CD8-positive, alpha-beta T cell (primary cell): ENCODE measurements at regions of chr1 and their contacts with region 1.

Region 1: DNA sequence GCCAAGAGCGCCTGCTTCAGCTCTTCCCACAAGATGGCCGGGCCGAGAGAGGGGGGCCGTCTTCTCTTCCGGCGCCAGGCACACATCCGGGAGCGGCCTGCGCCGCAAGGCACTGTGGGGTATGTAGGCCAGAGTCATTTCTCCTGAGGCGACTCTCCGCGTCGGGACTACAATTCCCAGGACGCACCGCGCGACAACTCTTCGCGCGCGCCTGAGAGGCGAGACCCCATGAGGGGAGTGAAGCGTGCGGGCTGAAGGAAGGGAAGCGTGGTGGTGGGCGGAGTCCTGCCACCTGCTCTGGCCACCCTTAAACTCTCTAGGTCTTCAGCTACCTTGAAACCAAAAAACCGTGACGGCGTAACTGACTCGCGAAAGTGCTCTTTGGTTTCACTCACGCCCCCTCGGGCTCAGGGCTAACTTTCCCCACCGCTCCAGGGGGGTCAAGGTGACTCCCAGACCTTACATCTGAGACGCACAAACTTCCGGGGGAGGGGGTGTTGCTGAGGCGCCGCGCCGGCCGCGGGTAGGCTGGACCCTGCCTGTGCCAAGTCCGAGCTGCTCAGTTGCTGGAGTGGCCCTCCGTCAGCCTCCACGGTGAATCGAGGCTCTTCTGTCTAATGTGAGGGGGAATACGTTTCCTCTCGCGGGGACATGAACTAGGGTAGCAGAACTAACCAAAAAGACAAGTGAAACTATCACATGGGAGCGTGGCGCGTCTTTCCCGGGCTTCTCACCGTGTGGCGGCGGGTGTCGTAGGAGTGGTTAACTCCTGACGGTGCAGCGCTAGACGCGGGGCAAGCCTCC is at the start of gene SERBP1:
- DNase-seq: peak; percentile 89 to 99 (median 95)
- ATAC-seq: peak; percentile 84
- H3K4me3 ChIP-seq: peak within 1 kb of the TSS; percentile 86 to 94
- H3K4me3 Mint-ChIP-seq: peak within 1 kb of the TSS; percentile 92
- H3K27ac ChIP-seq: peak within 1 kb of the TSS; percentile 86 to 98
- H3K27ac Mint-ChIP-seq: peak within 1 kb of the TSS; percentile 95
- H3K4me1 ChIP-seq: peaks cover 31% of the 10 kb centered on the region
- H3K4me1 Mint-ChIP-seq: peaks cover 54% of the 10 kb centered on the region
- H3K27me3 ChIP-seq: no peaks in the 10 kb centered on the region
- H3K27me3 Mint-ChIP-seq: no peaks in the 10 kb centered on the region
- CTCF ChIP-seq: no peak
- total RNA-seq, gene SERBP1: 136 to 143 TPM

Region 2: GRCh38 chr1:66929999-66930822 is 500.3 kb before region 1 on chr1:
- CTCF ChIA-PET with region 1: no interaction called
- POLR2A ChIA-PET with region 1: no interaction called
- intact Hi-C with region 1: loop called (anchors 1 to 2 kb)
- DNase-seq: peak; percentile 88 to 97 (median 95)
- ATAC-seq: peak; percentile 70
- H3K4me3 ChIP-seq: peak overlapping the region; percentile 86 to 90
- H3K4me3 Mint-ChIP-seq: peak overlapping the region; percentile 86
- H3K27ac ChIP-seq: peak overlapping the region; percentile 87 to 90
- H3K27ac Mint-ChIP-seq: peak overlapping the region; percentile 94
- H3K4me1 ChIP-seq: peaks cover 40% of the 10 kb centered on the region
- H3K4me1 Mint-ChIP-seq: peaks cover 61% of the 10 kb centered on the region
- H3K27me3 ChIP-seq: no peaks in the 10 kb centered on the region
- H3K27me3 Mint-ChIP-seq: no peaks in the 10 kb centered on the region
- CTCF ChIP-seq: peak; percentile 17

Region 3: GRCh38 chr1:67174716-67175284 is 255.8 kb before region 1 on chr1:
- CTCF ChIA-PET with region 1: no interaction called
- POLR2A ChIA-PET with region 1: interaction called, 6 read pairs
- intact Hi-C with region 1: loop called in 1 of 2 experiments (anchors 5 kb)
- DNase-seq: no peak
- ATAC-seq: no peak
- H3K4me3 ChIP-seq: no peak overlapping the region
- H3K4me3 Mint-ChIP-seq: no peak overlapping the region
- H3K27ac ChIP-seq: no peak overlapping the region
- H3K27ac Mint-ChIP-seq: no peak overlapping the region
- H3K4me1 ChIP-seq: peaks cover 35% of the 10 kb centered on the region
- H3K4me1 Mint-ChIP-seq: peaks cover 42% of the 10 kb centered on the region
- H3K27me3 ChIP-seq: no peaks in the 10 kb centered on the region
- H3K27me3 Mint-ChIP-seq: no peaks in the 10 kb centered on the region
- CTCF ChIP-seq: no peak

Region 4: DNA sequence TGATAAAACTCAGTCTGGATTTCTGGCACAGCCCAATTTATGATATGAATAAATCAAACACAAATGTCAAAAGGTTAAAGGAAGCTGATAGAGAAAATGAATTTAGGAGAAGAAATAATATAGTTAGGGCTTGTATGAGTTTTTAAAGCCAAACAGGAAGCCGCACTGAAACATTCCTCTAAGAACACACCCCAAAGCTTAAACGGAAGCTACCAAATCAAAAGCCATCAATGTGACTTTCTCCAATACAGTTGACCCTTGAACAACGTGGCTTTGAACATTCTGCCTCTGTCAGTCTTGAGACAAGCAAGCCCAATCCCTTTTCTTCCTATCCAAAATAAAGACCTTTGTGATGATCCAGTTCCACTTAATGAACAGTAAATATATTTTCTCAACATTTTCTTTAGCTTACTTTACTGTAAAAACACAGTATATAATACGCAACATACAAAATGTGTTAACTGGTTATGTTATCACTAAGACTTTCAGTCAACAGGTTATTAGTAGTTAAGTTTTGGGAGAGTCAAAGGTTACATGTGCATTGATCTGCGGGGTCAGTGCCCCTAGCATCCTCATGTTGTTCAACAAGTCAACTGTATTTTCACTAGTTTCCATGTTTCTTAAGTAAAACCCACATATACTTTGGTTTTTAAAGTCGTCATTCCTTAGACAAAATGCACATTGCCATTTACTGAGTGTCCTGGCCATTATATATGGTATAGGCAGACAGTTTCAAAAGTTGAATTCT is 11.5 kb before region 1 on chr1:
- CTCF ChIA-PET with region 1: interaction called, 3 read pairs
- POLR2A ChIA-PET with region 1: interaction called, 16 read pairs
- intact Hi-C with region 1: no loop called
- DNase-seq: no peak
- ATAC-seq: no peak
- H3K4me3 ChIP-seq: no peak overlapping the region
- H3K4me3 Mint-ChIP-seq: no peak overlapping the region
- H3K27ac ChIP-seq: no peak overlapping the region
- H3K27ac Mint-ChIP-seq: peak overlapping the region; percentile 75
- H3K4me1 ChIP-seq: peaks cover 9% of the 10 kb centered on the region
- H3K4me1 Mint-ChIP-seq: peaks cover 62% of the 10 kb centered on the region
- H3K27me3 ChIP-seq: no peaks in the 10 kb centered on the region
- H3K27me3 Mint-ChIP-seq: no peaks in the 10 kb centered on the region
- CTCF ChIP-seq: no peak

Region 5: DNA sequence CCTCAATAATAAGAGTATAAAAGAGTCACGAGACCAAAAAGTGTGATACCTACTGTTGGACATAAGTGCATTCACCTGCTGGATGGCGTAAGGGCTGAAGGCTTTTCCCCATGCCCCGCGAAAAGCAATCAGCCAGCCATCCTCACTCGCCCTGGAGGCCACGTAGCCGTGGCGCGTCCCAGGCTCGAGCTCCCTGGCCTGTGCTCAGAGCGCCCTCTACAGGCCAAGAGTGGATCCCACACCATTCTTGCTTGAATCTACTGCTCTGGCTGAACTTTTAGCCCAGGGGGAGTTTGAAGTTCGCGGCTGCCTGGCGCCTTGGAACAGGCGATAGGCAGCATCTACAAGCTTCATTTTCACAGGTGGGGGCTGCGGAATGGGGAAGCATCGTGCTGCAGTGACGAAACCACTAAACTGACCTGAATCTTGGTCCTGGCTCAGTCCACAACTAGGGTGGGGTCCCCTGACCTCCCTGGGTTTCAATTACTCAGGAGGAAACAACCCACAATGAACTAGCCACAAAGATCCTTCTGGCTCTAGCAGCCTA is 69.9 kb after region 1 on chr1:
- CTCF ChIA-PET with region 1: no interaction called
- POLR2A ChIA-PET with region 1: no interaction called
- intact Hi-C with region 1: loop called in 1 of 2 experiments (anchors 5 kb)
- DNase-seq: peak; percentile 73 to 91 (median 81)
- ATAC-seq: peak; percentile 100
- H3K4me3 ChIP-seq: no peak overlapping the region
- H3K4me3 Mint-ChIP-seq: no peak overlapping the region
- H3K27ac ChIP-seq: no peak overlapping the region
- H3K27ac Mint-ChIP-seq: no peak overlapping the region
- H3K4me1 ChIP-seq: no peaks in the 10 kb centered on the region
- H3K4me1 Mint-ChIP-seq: peaks cover 4% of the 10 kb centered on the region
- H3K27me3 ChIP-seq: peaks cover 0 to 7% of the 10 kb centered on the region in 2 experiments
- H3K27me3 Mint-ChIP-seq: peaks cover 13% of the 10 kb centered on the region
- CTCF ChIP-seq: peak; percentile 95